CD8-positive, alpha-beta T cell (primary cell): ENCODE measurements at regions of chr11 and their contacts with region 1.

Region 1: DNA sequence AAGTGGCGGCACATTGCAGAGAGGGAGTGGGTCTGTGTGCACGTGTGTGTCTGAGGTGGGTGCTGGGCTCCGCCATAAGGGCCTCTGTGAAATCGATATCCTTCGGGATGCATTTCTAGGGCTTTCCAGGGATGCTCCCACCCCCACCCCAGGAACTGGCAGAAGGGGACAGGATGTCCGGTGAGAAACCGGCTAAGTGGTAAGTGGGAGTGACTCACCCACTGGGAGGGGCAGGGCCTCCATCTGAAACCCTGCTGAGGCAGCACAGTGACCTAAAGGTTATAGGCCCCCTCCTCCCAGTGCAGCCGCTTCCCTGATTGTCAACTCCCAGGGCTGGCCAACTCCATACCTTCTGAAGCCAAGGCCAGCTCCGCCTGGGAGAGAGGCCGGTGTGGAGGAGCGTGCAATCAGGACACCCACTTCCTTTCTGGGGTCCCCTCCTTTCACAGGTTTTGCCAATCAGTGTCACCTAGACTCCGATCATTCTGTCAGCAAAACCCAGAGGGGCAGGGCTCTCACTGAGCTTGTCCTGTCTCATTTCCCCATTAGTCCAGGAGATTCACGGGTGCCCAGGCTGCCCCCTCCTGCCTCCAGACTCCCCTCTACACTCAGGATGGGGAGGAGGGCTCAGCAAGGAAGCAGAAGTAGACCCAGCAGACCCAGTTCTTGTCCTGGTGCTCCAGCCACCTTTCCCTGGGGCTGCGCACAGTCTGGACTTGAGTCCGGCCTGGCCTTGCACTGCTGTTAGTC is 44.5 kb downstream of the NECTIN1 start:
- DNase-seq: peak in 1 of 9 experiments; percentile 30
- ATAC-seq: no peak
- H3K4me3 ChIP-seq: no peak overlapping the region
- H3K4me3 Mint-ChIP-seq: no peak overlapping the region
- H3K27ac ChIP-seq: no peak overlapping the region
- H3K27ac Mint-ChIP-seq: no peak overlapping the region
- H3K4me1 ChIP-seq: peaks cover 16% of the 10 kb centered on the region
- H3K4me1 Mint-ChIP-seq: peaks cover 10% of the 10 kb centered on the region
- H3K27me3 ChIP-seq: peaks cover 0 to 8% of the 10 kb centered on the region in 2 experiments
- H3K27me3 Mint-ChIP-seq: no peaks in the 10 kb centered on the region
- CTCF ChIP-seq: no peak

Region 2: GRCh38 chr11:119741369-119742262 is 57.1 kb after region 1 on chr11:
- CTCF ChIA-PET with region 1: no interaction called
- POLR2A ChIA-PET with region 1: no interaction called
- intact Hi-C with region 1: no loop called
- DNase-seq: peak; percentile 31 to 77 (median 62)
- ATAC-seq: peak; percentile 71
- H3K4me3 ChIP-seq: no peak overlapping the region
- H3K4me3 Mint-ChIP-seq: peak overlapping the region; percentile 64
- H3K27ac ChIP-seq: no peak overlapping the region
- H3K27ac Mint-ChIP-seq: no peak overlapping the region
- H3K4me1 ChIP-seq: peaks cover 7% of the 10 kb centered on the region
- H3K4me1 Mint-ChIP-seq: peaks cover 13% of the 10 kb centered on the region
- H3K27me3 ChIP-seq: peaks cover 0 to 16% of the 10 kb centered on the region in 2 experiments
- H3K27me3 Mint-ChIP-seq: peaks cover 41% of the 10 kb centered on the region
- CTCF ChIP-seq: peak; percentile 75

Region 3: DNA sequence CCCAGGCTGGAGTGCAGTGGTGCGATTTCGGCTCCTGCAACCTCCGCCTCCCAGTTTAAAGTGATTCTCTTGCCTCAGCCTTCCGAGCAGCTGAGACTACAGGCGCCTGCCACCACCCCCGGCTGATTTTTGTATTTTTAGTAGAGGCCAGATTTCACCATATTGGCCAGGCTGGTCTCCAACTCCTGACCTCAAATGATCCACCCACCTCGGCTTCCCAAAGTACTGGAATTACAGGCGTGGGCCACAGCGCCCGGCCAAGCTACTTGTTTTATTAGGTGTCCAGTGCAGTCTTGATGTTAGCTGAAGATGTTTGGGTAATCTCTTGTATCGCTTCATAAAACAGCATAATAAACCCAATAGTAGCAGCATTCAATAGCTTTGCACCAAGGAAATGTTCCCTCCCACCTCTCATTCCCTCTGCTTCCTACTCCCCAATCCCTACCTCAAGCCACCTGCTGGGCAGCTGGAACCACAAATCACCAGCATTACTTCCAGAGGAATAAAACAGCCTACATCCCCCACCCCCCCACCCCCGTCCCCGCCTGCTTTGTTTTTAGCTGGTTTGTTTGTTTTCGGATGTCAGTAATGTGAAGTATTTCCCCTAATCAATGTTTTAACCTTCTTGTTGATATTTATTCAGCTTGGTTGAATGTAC is 816.0 kb after region 1 on chr11:
- CTCF ChIA-PET with region 1: no interaction called
- POLR2A ChIA-PET with region 1: no interaction called
- intact Hi-C with region 1: loop called in 1 of 2 experiments (anchors 5 kb)
- DNase-seq: no peak
- ATAC-seq: no peak
- H3K4me3 ChIP-seq: no peak overlapping the region
- H3K4me3 Mint-ChIP-seq: no peak overlapping the region
- H3K27ac ChIP-seq: no peak overlapping the region
- H3K27ac Mint-ChIP-seq: no peak overlapping the region
- H3K4me1 ChIP-seq: no peaks in the 10 kb centered on the region
- H3K4me1 Mint-ChIP-seq: no peaks in the 10 kb centered on the region
- H3K27me3 ChIP-seq: peaks cover 0 to 2% of the 10 kb centered on the region in 2 experiments
- H3K27me3 Mint-ChIP-seq: peaks cover 48% of the 10 kb centered on the region
- CTCF ChIP-seq: no peak